K562 (cell line): ENCODE measurements at regions of chr10 and their contacts with region 1.

Region 1: DNA sequence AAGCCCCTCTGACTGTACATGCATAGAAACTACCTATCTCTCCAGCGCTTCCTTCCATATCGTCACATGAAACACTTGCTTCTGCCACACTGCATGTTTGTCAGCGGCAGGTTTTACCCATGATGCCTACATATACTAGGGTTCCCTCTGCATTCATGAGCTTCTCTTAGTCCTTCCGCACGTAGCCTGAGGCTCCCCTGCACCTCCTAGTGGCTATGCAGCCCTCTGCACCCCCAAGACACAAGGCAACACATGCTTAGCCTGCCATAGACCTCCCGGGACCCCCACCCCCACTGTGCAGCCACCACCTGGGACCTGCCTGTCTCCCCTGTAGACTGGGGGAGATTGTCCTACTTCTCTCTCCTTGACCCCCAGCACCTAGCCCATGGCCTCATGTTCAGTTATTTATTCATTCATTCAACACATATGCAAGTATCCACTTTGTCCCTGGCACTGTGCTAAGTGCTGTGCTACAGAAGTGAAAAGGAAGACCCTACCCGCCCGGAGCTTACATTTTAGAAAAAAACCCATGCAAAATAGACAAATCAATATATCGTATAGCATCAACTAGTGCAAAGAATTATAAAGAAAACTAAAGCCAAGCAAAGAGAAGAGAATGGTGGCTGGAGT is 23.5 kb downstream of the TMEM273 start:
- DNase-seq: peak; percentile 72 to 83 (median 76)
- ATAC-seq: peak; percentile 80
- H3K4me3 ChIP-seq: no peak overlapping the region
- H3K27ac ChIP-seq: peak overlapping the region; percentile 65; the same call in 2 of the 3 replicates
- H3K4me1 ChIP-seq: peaks cover 66 to 90% of the 10 kb centered on the region in 2 experiments
- H3K27me3 ChIP-seq: no peaks in the 10 kb centered on the region
- CTCF ChIP-seq: peak; percentile 84 to 94 (median 90)
- EP300 ChIP-seq: no peak
- POLR2A ChIP-seq: no peak
- RAD21 ChIP-seq: peak; percentile 44 to 74

Region 2: GRCh38 chr10:49001402-49001801 is 163.3 kb before region 1 on chr10:
- CTCF ChIA-PET with region 1: no interaction called
- POLR2A ChIA-PET with region 1: no interaction called
- in situ Hi-C with region 1: no loop called
- intact Hi-C with region 1: loop called (anchors 5 kb)
- DNase-seq: peak; percentile 63 to 76 (median 74)
- ATAC-seq: peak; percentile 88
- H3K4me3 ChIP-seq: no peak overlapping the region
- H3K27ac ChIP-seq: no peak overlapping the region
- H3K4me1 ChIP-seq: peaks cover 11 to 19% of the 10 kb centered on the region in 2 experiments
- H3K27me3 ChIP-seq: peaks cover 0 to 9% of the 10 kb centered on the region in 2 experiments; a peak in 1 of 5 replicates
- CTCF ChIP-seq: peak; percentile 40 to 80 (median 66); a peak in 5 of 6 replicates
- EP300 ChIP-seq: no peak
- POLR2A ChIP-seq: no peak
- RAD21 ChIP-seq: peak; percentile 57 to 71

Region 3: DNA sequence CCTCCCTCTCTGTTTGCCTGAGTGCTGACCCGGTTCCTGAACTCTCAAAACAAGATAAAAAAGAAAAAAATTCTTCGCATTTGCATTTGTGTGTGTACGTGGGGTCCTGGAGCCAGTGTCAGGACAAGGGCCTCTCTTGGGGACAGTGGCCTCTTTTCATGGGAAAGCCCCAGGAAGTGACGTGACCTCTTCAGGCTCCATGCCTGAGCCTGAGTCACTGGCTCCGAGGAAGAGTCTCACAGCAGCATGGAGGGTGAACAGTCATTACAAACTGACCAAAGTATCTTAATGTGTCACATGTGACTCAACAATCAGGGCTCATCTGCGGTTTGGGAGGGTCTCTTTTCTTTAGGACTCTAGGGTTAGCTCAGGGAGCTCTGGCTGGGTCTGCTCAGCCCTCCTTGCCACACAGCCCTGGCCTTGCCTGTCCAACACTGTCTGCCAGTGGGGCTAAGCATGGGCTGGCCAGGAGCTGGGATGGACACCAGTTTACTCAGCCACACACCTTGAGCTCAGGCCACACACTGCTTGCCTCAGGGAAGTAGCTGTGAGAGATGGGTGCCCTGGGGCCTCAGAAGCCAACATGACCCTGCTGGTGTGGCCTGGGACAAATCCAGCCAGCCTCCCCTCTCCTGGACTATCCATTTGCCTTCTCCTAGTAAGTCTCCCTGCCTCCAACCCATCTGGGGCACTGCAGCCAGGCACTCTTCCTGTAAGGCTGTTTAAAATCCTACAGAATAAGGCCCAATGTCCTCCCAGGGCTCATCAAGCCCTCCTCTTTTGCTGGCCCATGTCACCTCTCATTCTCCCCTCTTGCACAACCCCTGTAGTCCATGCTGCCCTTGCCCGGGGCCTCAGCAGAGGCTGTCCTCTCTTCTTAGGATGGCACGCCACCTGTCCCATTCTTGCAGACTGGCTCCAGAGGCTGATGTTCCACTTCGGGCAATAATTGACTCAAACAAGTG is 13.0 kb after region 1 on chr10:
- CTCF ChIA-PET with region 1: no interaction called
- POLR2A ChIA-PET with region 1: interaction called, 30 read pairs
- in situ Hi-C with region 1: no loop called
- intact Hi-C with region 1: no loop called
- DNase-seq: peak; percentile 53 to 88 (median 67)
- ATAC-seq: peak; percentile 36
- H3K4me3 ChIP-seq: no peak overlapping the region
- H3K27ac ChIP-seq: peak overlapping the region; percentile 84
- H3K4me1 ChIP-seq: peaks cover 74 to 100% of the 10 kb centered on the region in 2 experiments
- H3K27me3 ChIP-seq: no peaks in the 10 kb centered on the region
- CTCF ChIP-seq: no peak
- EP300 ChIP-seq: peak; percentile 64; the same call in 1 of the 2 replicates
- POLR2A ChIP-seq: peak; percentile 32; the same call in 1 of the 2 replicates
- RAD21 ChIP-seq: no peak; a peak in 1 of 4 replicates

Region 4: DNA sequence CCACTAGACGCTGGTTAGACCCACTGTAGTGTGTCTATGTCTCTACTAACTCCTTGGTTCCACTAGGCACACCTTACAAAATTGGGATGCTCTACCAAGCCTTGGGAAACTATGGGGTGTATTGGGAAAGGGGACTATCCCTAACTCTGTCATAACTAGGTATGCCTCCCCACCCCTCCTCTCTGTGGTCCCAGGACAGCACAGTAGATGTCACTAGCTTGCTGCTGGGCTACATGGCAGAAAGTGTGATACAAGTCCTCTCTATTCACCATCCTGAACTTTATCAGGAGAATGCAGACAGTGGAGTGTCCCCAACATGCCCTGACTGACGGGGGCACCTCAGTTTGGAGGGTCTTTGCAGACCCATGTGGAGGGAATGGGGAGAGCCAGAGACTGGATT is 53.8 kb after region 1 on chr10:
- CTCF ChIA-PET with region 1: no interaction called
- POLR2A ChIA-PET with region 1: no interaction called
- in situ Hi-C with region 1: no loop called
- intact Hi-C with region 1: loop called (anchors 2 kb)
- DNase-seq: peak in 2 of 4 experiments; percentile 43 to 48
- ATAC-seq: peak; percentile 86
- H3K4me3 ChIP-seq: no peak overlapping the region
- H3K27ac ChIP-seq: no peak overlapping the region
- H3K4me1 ChIP-seq: peaks cover 4 to 9% of the 10 kb centered on the region in 2 experiments; a peak in 3 of 5 replicates
- H3K27me3 ChIP-seq: no peaks in the 10 kb centered on the region
- CTCF ChIP-seq: peak; percentile 37 to 54 (median 47)
- EP300 ChIP-seq: no peak
- POLR2A ChIP-seq: no peak
- RAD21 ChIP-seq: peak; percentile 21 to 60; a peak in 2 of 4 replicates

Region 5: GRCh38 chr10:49512121-49512809 is 347.6 kb after region 1 on chr10:
- CTCF ChIA-PET with region 1: no interaction called
- POLR2A ChIA-PET with region 1: no interaction called
- in situ Hi-C with region 1: no loop called
- intact Hi-C with region 1: loop called (anchors 5 kb)
- DNase-seq: peak in 3 of 4 experiments; percentile 44 to 51 (median 46)
- ATAC-seq: peak; percentile 92
- H3K4me3 ChIP-seq: no peak overlapping the region
- H3K27ac ChIP-seq: no peak overlapping the region
- H3K4me1 ChIP-seq: no peaks in the 10 kb centered on the region
- H3K27me3 ChIP-seq: no peaks in the 10 kb centered on the region
- CTCF ChIP-seq: peak; percentile 73 to 92 (median 75)
- EP300 ChIP-seq: no peak
- POLR2A ChIP-seq: no peak
- RAD21 ChIP-seq: peak; percentile 87 to 88